ENCODE measurements at regions of chr1 and their contacts with region 1.

Region 1: DNA sequence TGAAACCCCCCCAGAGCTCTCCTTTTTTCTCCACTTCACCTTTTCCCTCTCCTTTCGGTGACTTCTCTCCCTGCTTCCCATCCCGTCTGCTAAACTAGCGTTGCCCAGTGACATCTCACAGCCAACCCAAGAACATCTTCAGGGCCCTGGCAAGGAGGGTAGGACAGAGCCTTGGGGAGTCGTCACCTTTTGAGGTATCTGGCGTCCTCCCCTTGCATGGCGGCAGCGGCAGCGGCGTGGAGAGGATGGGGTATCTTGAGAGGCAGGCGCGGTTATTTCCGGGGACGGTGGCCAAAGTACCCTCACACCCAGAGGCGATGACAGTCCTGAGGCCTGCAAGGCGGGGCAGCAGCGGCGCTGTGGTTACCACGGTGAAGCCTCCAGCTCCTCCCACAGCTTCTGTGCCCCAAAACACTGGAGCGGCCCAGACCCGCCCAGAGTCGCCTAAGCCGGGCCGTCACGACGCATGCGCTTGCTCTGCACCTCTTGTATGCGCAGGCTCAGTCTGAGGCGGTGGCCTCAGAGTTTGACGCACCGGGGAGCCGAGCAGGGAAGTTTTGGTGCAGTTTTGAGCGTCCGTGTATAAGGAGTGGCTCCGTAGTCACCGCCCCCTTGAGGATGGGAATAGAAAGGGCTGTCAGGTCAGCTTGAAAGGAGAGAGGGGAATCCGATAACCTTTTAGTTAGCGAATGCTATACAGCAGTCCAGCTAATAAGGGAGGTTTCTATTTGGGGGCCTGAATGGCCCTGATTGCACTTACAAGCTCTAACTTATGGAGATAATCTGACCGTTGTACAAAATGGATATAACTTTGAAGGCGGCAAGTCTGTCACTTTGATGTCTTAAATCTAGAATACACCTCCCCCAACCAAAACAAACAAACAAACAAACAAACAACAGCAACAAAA is at the start of gene KIFAP3:
- DNase-seq: peak; percentile 89
- ATAC-seq: peak; percentile 93
- H3K4me3 Mint-ChIP-seq: peak within 1 kb of the TSS; percentile 94
- H3K27ac Mint-ChIP-seq: peak within 1 kb of the TSS; percentile 87
- H3K4me1 Mint-ChIP-seq: peaks cover 52% of the 10 kb centered on the region
- H3K27me3 Mint-ChIP-seq: peaks cover 2% of the 10 kb centered on the region
- CTCF ChIP-seq: no peak
- total RNA-seq, gene KIFAP3: 11.8 and 12.7 TPM in 2 replicates

Region 2: GRCh38 chr1:169106095-169106920 is 968.2 kb before region 1 on chr1 and contains the start of gene ATP1B1:
- CTCF ChIA-PET with region 1: no interaction called
- POLR2A ChIA-PET with region 1: no interaction called
- intact Hi-C with region 1: loop called (anchors 5 kb)
- DNase-seq: peak; percentile 77
- ATAC-seq: peak; percentile 95
- H3K4me3 Mint-ChIP-seq: peak within 1 kb of the TSS; percentile 89
- H3K27ac Mint-ChIP-seq: no peak within 1 kb of the TSS
- H3K4me1 Mint-ChIP-seq: peaks cover 18% of the 10 kb centered on the region
- H3K27me3 Mint-ChIP-seq: peaks cover 35% of the 10 kb centered on the region
- CTCF ChIP-seq: no peak
- total RNA-seq, gene ATP1B1: 1.6 and 1.8 TPM in 2 replicates

Region 3: DNA sequence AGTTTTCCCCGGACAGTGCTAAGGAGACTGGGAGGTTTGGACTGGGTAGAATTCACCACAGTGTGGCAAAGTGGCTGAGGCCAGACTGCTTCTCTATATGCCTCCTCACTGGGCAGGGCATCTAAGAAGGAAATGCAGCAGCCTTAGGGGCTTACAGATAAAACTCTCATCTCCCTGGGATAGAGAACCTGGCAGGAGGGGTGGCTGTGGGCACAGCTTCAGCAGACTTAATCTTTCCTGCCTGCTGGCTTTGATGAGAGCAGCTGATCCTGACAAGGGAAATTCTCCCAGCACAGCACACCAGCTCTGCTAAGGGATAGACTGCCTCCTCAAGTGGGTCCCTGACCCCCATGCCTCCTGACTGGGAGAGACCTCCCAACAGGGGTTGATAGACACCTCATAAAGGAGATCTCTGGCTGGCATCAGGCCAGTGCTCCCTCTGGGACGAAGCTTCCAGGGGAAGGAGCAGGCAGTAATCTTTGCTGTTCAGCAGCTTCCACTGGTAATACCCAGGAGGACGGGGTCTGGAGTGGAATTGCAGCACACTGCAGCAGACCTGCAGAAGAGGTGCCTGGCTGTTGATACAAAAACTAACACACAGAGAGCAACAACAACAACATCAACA is 25.2 kb before region 1 on chr1:
- CTCF ChIA-PET with region 1: no interaction called
- POLR2A ChIA-PET with region 1: no interaction called
- intact Hi-C with region 1: no loop called
- DNase-seq: no peak
- ATAC-seq: no peak
- H3K4me3 Mint-ChIP-seq: no peak overlapping the region
- H3K27ac Mint-ChIP-seq: no peak overlapping the region
- H3K4me1 Mint-ChIP-seq: no peaks in the 10 kb centered on the region
- H3K27me3 Mint-ChIP-seq: no peaks in the 10 kb centered on the region
- CTCF ChIP-seq: no peak

Region 4: GRCh38 chr1:170426596-170426995 is 352.1 kb after region 1 on chr1:
- CTCF ChIA-PET with region 1: no interaction called
- POLR2A ChIA-PET with region 1: no interaction called
- intact Hi-C with region 1: no loop called
- DNase-seq: no peak
- ATAC-seq: no peak
- H3K4me3 Mint-ChIP-seq: no peak overlapping the region
- H3K27ac Mint-ChIP-seq: no peak overlapping the region
- H3K4me1 Mint-ChIP-seq: no peaks in the 10 kb centered on the region
- H3K27me3 Mint-ChIP-seq: peaks cover 10% of the 10 kb centered on the region
- CTCF ChIP-seq: no peak

Region 5: DNA sequence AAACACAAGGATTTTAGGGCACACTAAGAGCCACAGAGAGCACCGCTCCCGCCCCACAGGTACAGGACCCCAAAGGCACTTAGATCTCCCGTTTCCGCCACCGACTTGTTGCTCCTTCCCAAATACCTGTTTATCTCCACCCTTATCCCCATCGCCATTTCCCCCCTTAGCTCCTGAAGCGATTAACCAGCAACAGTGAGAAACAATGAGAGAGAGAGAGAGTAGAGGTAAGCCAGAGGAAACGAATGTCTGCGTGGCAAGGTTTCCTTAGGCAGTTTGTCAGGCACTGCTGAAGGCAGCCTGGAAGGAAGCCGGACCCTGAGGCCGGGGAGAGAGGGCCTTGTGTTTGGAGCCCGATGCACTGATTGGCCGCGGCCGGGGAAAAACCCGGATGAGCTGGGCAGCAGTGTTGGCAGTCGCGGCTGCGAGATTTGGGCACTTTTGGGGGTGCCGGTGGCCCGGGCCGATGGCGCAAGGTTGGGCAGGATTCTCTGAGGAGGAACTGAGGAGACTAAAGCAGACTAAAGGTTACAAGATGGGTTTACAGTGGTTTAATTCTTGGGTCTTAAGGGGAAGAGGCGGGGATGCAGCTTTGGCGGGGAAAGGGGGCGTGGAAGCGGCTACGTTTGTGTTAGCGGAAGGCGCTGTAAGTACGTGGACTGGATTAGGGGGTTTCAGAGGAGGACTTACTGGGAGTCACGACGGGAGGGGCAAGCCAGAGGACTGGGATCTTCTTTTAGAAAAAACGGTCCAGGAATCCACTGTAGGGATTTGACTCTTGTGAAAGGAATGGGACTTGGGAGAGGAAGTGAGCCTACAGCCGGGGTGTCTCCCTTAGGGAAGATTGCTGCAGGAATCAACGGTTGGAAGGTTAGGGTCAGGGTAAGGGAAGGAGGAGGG is 457.5 kb after region 1 on chr1 and contains the start of gene GORAB:
- CTCF ChIA-PET with region 1: no interaction called
- POLR2A ChIA-PET with region 1: interaction called, 5 read pairs
- intact Hi-C with region 1: loop called (anchors 1 kb)
- DNase-seq: peak; percentile 77
- ATAC-seq: peak; percentile 98
- H3K4me3 Mint-ChIP-seq: no peak within 1 kb of the TSS
- H3K27ac Mint-ChIP-seq: no peak within 1 kb of the TSS
- H3K4me1 Mint-ChIP-seq: peaks cover 13% of the 10 kb centered on the region
- H3K27me3 Mint-ChIP-seq: peaks cover 4% of the 10 kb centered on the region
- CTCF ChIP-seq: no peak
- total RNA-seq, gene GORAB: 20.0 and 20.2 TPM in 2 replicates

Measured in activated B cell treated with CpG ODN at 0.5 μM for 24 hours (primary cell).